Activated CD4-positive, alpha-beta memory T cell treated with anti-CD3 and anti-CD28 coated beads for 36 hours (primary cell): ENCODE measurements at regions of chr12 and their contacts with region 1.

Region 1: DNA sequence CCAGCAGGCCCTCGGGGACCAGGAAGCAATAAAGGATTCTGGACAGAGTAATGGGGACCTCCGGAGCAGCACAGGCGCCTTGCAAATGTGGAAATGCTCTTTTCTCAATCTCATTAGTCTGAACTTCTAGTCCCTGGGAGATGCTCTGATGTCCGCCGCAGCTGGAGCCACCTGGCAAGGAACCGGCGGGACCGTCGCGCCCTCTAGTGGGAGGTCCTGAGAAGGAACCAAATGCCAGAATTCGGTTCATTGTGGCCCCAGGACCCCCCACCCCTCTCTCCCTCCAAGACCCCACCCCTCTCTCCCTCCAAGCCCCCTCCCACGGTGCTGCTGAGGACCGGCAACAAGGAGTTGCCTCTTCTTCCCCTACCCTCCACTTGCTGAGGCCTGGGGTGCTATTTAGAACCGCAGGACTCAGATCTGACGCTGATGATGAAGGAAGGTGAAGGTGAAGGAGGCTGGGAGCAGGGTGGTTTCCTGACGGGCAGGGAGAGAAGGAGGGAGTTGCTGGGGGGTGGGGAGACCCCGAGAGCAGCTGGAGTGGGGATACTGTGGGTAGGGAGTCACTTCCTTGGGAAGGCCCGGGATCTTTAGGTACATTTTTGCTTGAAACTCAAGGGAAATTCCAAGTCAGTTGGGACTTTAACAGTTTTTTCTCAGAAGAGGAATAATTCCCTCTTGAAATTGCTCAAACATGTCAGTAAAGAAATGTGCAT is 42.5 kb downstream of the SMIM41 start:
- DNase-seq: peak; percentile 77
- H3K4me3 Mint-ChIP-seq: no peak overlapping the region
- H3K27ac Mint-ChIP-seq: no peak overlapping the region
- H3K4me1 Mint-ChIP-seq: peaks cover 12% of the 10 kb centered on the region
- H3K27me3 Mint-ChIP-seq: peaks cover 4% of the 10 kb centered on the region

Region 2: GRCh38 chr12:51905471-51906429 is 216.2 kb before region 1 on chr12:
- CTCF ChIA-PET with region 1: no interaction called
- POLR2A ChIA-PET with region 1: no interaction called
- intact Hi-C with region 1: no loop called
- DNase-seq: no peak
- H3K4me3 Mint-ChIP-seq: no peak overlapping the region
- H3K27ac Mint-ChIP-seq: no peak overlapping the region
- H3K4me1 Mint-ChIP-seq: no peaks in the 10 kb centered on the region
- H3K27me3 Mint-ChIP-seq: peaks cover 21% of the 10 kb centered on the region

Region 3: GRCh38 chr12:52082988-52083637 is 38.9 kb before region 1 on chr12:
- CTCF ChIA-PET with region 1: interaction called, 7 read pairs
- POLR2A ChIA-PET with region 1: no interaction called
- intact Hi-C with region 1: loop called (anchors 5 kb)
- DNase-seq: peak; percentile 74
- H3K4me3 Mint-ChIP-seq: no peak overlapping the region
- H3K27ac Mint-ChIP-seq: no peak overlapping the region
- H3K4me1 Mint-ChIP-seq: peaks cover 4% of the 10 kb centered on the region
- H3K27me3 Mint-ChIP-seq: no peaks in the 10 kb centered on the region

Region 4: DNA sequence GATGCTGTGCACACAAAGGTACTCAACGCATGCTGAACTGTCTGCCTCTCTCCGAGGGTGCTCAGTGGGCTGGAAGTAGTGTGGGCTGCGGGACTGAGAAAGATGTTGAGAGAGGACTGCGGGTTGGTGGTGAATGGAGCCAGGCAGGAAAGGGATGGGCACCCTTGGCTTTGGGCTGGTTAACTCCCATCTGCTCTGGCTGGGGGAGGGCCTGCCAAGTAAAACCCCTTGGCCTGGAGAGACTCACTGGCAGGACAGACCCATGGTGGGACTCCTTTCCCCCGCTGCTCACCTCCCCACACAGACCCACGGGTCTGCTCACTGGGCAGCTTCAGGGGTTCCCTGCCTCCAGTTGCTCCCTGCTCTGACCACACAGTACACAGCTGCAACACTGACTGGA is 15.7 kb after region 1 on chr12:
- CTCF ChIA-PET with region 1: interaction called, 12 read pairs
- POLR2A ChIA-PET with region 1: no interaction called
- intact Hi-C with region 1: no loop called
- DNase-seq: no peak
- H3K4me3 Mint-ChIP-seq: no peak overlapping the region
- H3K27ac Mint-ChIP-seq: no peak overlapping the region
- H3K4me1 Mint-ChIP-seq: no peaks in the 10 kb centered on the region
- H3K27me3 Mint-ChIP-seq: no peaks in the 10 kb centered on the region